ENCODE measurements at regions of chr2 and their contacts with region 1.

Region 1: DNA sequence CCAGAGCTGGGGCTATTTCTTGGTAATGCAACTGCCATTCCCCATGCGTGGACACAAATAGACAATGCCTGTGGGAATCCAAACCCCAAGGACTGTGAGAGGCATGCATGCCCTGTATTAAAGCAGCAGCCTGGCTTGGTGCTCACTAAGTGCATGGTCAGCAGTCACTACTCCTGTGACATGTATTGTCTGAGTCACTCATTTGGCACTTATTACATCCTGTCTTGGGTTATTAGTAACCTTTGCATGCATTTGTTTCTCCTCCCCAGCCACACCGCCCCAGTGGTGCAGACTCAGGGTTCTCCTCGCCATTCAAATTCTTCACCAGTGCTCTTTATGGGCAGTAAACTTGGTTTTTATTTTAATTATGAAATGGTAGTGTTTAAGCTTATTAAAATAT is 30.2 kb downstream of the PRKCE start:
- DNase-seq: peak; percentile 68

Region 2: GRCh38 chr2:45743531-45744396 is 62.1 kb after region 1 on chr2:
- in situ Hi-C with region 1: loop called (anchors 10 kb)
- DNase-seq: no peak

Region 3: DNA sequence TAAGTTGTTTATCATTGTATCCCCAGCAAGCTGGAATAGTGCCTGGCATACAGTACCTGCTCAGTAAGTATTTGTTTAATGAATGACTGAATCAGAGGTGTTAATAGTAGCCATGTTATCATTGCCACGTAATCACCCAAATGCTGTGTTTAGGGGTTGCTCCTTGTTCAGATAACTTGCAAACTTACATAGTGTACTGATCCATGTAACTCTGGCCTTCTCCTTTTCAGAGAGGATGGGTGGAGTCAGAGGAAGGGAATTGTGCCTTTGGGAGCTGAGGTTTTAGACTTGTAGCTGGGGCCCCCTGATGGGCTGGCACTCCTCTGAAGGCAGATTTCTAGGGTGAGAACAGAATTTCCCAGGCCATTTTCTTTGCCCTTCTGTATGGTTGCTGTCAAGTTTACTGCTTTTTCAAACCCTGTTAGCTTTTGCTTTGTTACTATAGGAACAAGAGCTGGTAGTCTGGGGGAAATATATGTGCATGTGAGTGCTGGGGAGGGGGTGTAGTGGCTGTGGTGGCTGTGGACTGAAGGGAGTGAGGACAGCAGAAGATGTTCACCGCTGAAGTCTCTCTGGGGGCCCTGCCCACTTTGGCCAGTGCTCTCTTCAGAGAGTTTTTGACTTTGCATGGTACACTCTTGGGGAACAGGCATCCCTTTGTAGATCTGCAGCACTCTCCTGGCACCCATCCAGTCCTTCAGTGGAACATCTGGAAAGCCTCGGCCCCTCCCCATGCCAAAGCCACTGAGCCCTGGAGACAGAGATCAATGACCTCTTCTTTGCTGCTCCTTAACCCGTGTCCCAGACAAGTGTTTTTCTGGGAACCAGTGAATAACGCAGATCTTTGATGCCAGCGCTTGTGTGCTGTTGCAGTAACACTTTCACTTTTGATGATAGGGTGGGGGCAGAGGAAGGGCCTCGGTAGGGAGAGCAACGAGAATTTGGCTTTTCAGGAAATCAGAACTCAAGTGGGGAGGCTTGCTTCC is 178.8 kb after region 1 on chr2:
- in situ Hi-C with region 1: no loop called
- DNase-seq: no peak

Measured in Caki2 (cell line).